BJ (cell line): ENCODE measurements at regions of chr15 and their contacts with region 1.

Region 1: GRCh38 chr15:90320061-90320884 is 31.8 kb upstream of the ZNF774 start:
- DNase-seq: peak; percentile 39
- H3K4me3 ChIP-seq: no peak overlapping the region
- H3K27me3 ChIP-seq: no peaks in the 10 kb centered on the region
- CTCF ChIP-seq: peak; percentile 98

Region 2: GRCh38 chr15:90191794-90192509 is 128.3 kb before region 1 on chr15:
- CTCF ChIA-PET with region 1: no interaction called
- POLR2A ChIA-PET with region 1: no interaction called
- DNase-seq: no peak
- H3K4me3 ChIP-seq: no peak overlapping the region
- H3K27me3 ChIP-seq: no peaks in the 10 kb centered on the region
- CTCF ChIP-seq: no peak

Region 3: GRCh38 chr15:90306560-90306959 is 13.7 kb before region 1 on chr15:
- CTCF ChIA-PET with region 1: interaction called, 39 read pairs
- POLR2A ChIA-PET with region 1: interaction called, 6 read pairs
- DNase-seq: no peak
- H3K4me3 ChIP-seq: no peak overlapping the region
- H3K27me3 ChIP-seq: no peaks in the 10 kb centered on the region
- CTCF ChIP-seq: no peak

Region 4: GRCh38 chr15:90362936-90363212 is 42.6 kb after region 1 on chr15:
- CTCF ChIA-PET with region 1: interaction called, 18 read pairs
- POLR2A ChIA-PET with region 1: no interaction called
- DNase-seq: peak; percentile 52
- H3K4me3 ChIP-seq: no peak overlapping the region
- H3K27me3 ChIP-seq: no peaks in the 10 kb centered on the region
- CTCF ChIP-seq: no peak

Region 5: GRCh38 chr15:90419738-90420406 is 99.6 kb after region 1 on chr15:
- CTCF ChIA-PET with region 1: interaction called, 13 read pairs
- POLR2A ChIA-PET with region 1: no interaction called
- DNase-seq: peak; percentile 66
- H3K4me3 ChIP-seq: 0 out of 2 replicates have a peak overlapping the region, but pooled peaks have one; percentile 11
- H3K27me3 ChIP-seq: no peaks in the 10 kb centered on the region
- CTCF ChIP-seq: no peak

Region 6: DNA sequence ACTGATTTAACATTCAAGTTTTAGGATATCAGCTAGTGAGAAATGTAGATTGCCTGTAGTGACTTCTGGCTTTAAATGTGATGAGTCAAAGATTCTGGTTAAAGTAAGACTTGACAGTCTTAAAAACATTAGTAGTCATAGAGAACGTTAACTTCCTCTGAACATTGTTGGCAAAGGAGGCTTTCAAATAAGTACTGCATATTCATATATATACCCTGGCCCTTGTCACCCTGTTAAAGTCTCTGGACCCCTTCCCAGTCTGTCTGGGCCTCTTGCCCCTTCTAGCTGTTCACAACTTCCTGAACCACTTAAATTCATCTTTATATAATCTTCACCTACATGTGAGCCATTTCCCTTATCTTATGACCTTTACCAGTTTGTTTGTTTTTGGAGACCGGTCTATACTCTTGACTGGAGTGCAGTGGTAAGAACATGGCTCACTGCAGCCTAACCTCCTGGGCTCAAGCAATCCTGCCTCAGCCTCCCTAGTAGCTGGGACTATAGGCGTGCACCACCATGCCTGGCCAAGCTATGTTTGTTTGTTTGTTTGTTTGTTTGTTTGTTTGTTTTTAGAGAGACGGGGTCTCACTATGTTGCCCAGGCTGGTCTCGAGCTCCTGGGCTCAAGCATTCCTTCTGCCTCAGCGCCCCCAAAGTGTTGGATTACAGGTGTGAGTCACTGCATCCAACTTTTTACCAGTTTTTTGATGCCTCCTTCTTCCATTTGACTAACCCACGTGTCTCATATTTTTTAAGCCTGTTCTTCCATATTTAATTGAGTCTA is 145.1 kb after region 1 on chr15:
- CTCF ChIA-PET with region 1: interaction called, 19 read pairs
- POLR2A ChIA-PET with region 1: no interaction called
- DNase-seq: no peak
- H3K4me3 ChIP-seq: no peak overlapping the region
- H3K27me3 ChIP-seq: no peaks in the 10 kb centered on the region
- CTCF ChIP-seq: no peak

Region 7: GRCh38 chr15:90489514-90489913 is 169.2 kb after region 1 on chr15:
- CTCF ChIA-PET with region 1: interaction called, 169 read pairs
- POLR2A ChIA-PET with region 1: no interaction called
- DNase-seq: no peak
- H3K4me3 ChIP-seq: no peak overlapping the region
- H3K27me3 ChIP-seq: no peaks in the 10 kb centered on the region
- CTCF ChIP-seq: no peak

Region 8: DNA sequence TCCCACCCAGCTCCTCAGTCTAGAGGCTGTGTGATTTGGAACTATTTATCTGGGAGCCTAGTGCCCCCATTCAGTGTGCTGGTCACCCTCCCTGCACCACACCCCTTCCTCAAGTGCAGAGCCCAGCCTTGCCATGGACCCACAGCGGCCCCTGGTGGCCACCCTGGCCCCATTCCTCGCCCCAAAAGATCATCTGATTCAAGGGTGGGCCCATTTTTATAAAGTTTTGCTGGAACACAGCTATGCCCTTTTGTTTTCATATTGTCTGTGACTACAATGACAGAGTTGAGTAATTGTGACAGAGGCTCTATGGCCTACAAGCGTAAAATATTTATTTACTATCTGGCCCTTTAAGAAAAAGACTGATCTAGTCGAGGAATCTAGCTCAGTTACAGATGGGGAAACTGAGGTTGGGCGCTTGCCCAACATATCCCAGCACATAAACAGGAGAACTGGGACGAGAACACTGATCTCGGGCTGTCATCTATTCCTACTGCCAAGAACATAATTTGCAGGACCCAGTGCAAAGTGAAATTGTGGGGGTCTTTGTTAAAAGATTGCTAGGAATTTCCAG is 565.9 kb after region 1 on chr15:
- CTCF ChIA-PET with region 1: interaction called, 19 read pairs
- POLR2A ChIA-PET with region 1: no interaction called
- DNase-seq: no peak
- H3K4me3 ChIP-seq: no peak overlapping the region
- H3K27me3 ChIP-seq: no peaks in the 10 kb centered on the region
- CTCF ChIP-seq: peak; percentile 99